Activated CD4-positive, alpha-beta memory T cell treated with anti-CD3 and anti-CD28 coated beads, Interleukin-2, amount 10 ng/mL, durations not matched to agents 7 days and 5 days (primary cell): ENCODE measurements at regions of chr17 and their contacts with region 1.

Region 1: DNA sequence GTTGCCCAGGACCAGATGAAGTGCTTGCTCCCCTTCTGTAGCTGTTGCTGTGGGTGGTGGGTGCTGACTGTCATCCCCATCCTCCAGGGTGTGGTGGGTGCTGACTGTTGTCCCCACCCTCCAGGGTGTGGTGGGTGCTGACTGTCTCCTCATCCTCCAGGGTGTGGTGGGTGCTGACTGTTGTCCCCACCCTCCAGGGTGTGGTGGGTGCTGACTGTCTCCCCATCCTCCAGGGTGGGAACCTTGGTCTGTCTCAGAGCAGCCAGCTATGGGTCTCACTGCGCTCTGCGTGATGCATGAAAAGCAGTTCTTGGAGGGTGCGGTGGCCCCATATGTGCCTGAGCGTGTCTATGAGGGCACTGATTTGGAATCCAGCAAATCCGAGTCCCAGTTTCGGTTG is 163.8 kb downstream of the RPTOR start:
- DNase-seq: peak; percentile 45
- H3K4me3 Mint-ChIP-seq: peak overlapping the region; percentile 57
- H3K27ac Mint-ChIP-seq: peak overlapping the region; percentile 93
- H3K4me1 Mint-ChIP-seq: peaks cover 94% of the 10 kb centered on the region
- H3K27me3 Mint-ChIP-seq: no peaks in the 10 kb centered on the region

Region 2: GRCh38 chr17:80720610-80721577 is 12.4 kb after region 1 on chr17:
- CTCF ChIA-PET with region 1: interaction called, 5 read pairs
- POLR2A ChIA-PET with region 1: interaction called, 18 read pairs
- DNase-seq: peak; percentile 87
- H3K4me3 Mint-ChIP-seq: peak overlapping the region; percentile 64
- H3K27ac Mint-ChIP-seq: peak overlapping the region; percentile 92
- H3K4me1 Mint-ChIP-seq: peaks cover 60% of the 10 kb centered on the region
- H3K27me3 Mint-ChIP-seq: no peaks in the 10 kb centered on the region